ENCODE measurements at regions of chr4 and their contacts with region 1.

Region 1: GRCh38 chr4:56530269-56531148 is 24.9 kb downstream of the ARL9 start:
- DNase-seq: peak; percentile 72
- ATAC-seq: peak; percentile 99
- H3K4me3 Mint-ChIP-seq: peak overlapping the region; percentile 68
- H3K27ac Mint-ChIP-seq: no peak overlapping the region
- H3K4me1 Mint-ChIP-seq: peaks cover 4% of the 10 kb centered on the region
- H3K27me3 Mint-ChIP-seq: peaks cover 12% of the 10 kb centered on the region
- CTCF ChIP-seq: no peak

Region 2: DNA sequence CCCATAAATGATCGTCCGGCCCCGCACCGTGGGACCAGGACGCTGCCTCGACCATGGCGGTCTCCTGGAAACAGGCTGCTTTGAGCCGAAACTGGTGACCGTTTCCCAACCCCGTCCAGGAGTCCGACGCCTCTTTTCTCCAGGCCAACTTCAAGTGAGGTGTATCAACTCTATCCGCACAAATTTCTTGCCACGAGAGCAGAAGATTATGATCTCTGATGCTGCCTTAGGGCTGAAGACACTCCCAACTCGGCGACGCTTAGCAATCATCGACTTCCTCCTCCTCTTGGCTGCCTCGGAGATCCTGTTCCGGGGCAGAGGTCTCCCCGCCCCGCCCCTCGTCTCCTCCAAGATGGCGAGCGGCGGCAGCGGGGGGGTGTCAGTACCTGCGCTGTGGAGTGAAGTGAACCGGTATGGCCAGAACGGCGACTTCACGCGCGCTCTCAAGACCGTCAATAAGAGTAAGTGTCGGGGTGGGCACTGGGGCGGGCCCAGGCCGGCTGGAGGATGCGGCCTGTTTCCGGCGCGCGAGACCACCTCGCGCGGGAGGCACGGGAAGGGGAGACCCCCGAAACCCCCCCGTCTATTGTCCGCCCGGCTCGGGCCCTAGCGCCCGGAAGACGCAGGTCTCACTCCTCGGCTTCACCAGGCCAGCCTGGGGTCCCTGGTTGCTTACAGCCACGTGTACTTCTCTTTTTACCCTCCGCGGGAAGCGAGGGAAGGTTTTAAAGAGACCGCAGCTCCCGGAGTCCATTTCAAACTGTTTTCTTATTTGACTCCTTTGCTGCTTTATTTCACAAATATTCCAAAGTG is 63.0 kb before region 1 on chr4 and contains the start of gene SRP72:
- CTCF ChIA-PET with region 1: no interaction called
- POLR2A ChIA-PET with region 1: interaction called, 3 read pairs
- intact Hi-C with region 1: loop called (anchors 1 kb)
- DNase-seq: peak; percentile 83
- ATAC-seq: peak; percentile 96
- H3K4me3 Mint-ChIP-seq: peak within 1 kb of the TSS; percentile 99
- H3K27ac Mint-ChIP-seq: peak within 1 kb of the TSS; percentile 96
- H3K4me1 Mint-ChIP-seq: peaks cover 57% of the 10 kb centered on the region
- H3K27me3 Mint-ChIP-seq: no peaks in the 10 kb centered on the region
- CTCF ChIP-seq: no peak
- total RNA-seq, gene SRP72: 139 TPM in 2 replicates

Region 3: GRCh38 chr4:56587091-56587490 is 56.6 kb after region 1 on chr4:
- CTCF ChIA-PET with region 1: no interaction called
- POLR2A ChIA-PET with region 1: no interaction called
- intact Hi-C with region 1: no loop called
- DNase-seq: no peak
- ATAC-seq: no peak
- H3K4me3 Mint-ChIP-seq: no peak overlapping the region
- H3K27ac Mint-ChIP-seq: no peak overlapping the region
- H3K4me1 Mint-ChIP-seq: no peaks in the 10 kb centered on the region
- H3K27me3 Mint-ChIP-seq: peaks cover 3% of the 10 kb centered on the region
- CTCF ChIP-seq: no peak

Region 4: DNA sequence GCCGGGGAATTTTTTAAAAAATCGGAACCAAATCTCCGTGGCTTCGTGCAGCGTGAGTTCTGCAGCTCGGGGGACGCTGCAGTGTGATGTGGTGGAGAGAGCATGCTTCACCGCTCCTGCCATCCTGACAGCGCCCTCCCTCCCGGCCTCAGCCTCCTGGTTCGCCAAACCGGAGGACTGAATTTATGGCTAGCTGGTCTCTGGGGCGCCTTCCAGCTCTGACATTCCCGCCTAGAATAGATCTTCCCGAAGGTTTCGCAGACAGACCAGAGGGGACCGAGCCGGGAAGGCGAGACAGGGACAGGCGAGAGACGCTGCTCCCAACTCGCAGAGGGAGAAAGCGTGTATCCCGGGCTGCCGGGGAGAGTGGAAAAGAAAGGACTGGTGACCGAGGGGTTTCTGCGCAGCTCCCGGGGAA is 124.7 kb after region 1 on chr4:
- CTCF ChIA-PET with region 1: no interaction called
- POLR2A ChIA-PET with region 1: no interaction called
- intact Hi-C with region 1: loop called (anchors 2 kb)
- DNase-seq: peak; percentile 23
- ATAC-seq: peak; percentile 25
- H3K4me3 Mint-ChIP-seq: peak overlapping the region; percentile 92
- H3K27ac Mint-ChIP-seq: peak overlapping the region; percentile 46
- H3K4me1 Mint-ChIP-seq: peaks cover 65% of the 10 kb centered on the region
- H3K27me3 Mint-ChIP-seq: peaks cover 2% of the 10 kb centered on the region
- CTCF ChIP-seq: no peak

Region 5: GRCh38 chr4:56821381-56822243 is 291.1 kb after region 1 on chr4 and contains the start of gene SPINK2:
- CTCF ChIA-PET with region 1: no interaction called
- POLR2A ChIA-PET with region 1: no interaction called
- intact Hi-C with region 1: loop called (anchors 5 kb)
- DNase-seq: peak; percentile 58
- ATAC-seq: peak; percentile 87
- H3K4me3 Mint-ChIP-seq: peak within 1 kb of the TSS; percentile 81
- H3K27ac Mint-ChIP-seq: peak within 1 kb of the TSS; percentile 24
- H3K4me1 Mint-ChIP-seq: peaks cover 31% of the 10 kb centered on the region
- H3K27me3 Mint-ChIP-seq: no peaks in the 10 kb centered on the region
- CTCF ChIP-seq: no peak
- total RNA-seq, gene SPINK2: 1.2 TPM in 1 of 2 replicates, not detected in the other